ENCODE measurements at regions of chr7 and their contacts with region 1.

Region 1: GRCh38 chr7:98771519-98771918 is 98.3 kb downstream of the TMEM130 start:
- DNase-seq: no peak
- H3K4me3 Mint-ChIP-seq: no peak overlapping the region
- H3K27ac Mint-ChIP-seq: no peak overlapping the region
- H3K4me1 Mint-ChIP-seq: no peaks in the 10 kb centered on the region
- H3K27me3 Mint-ChIP-seq: peaks cover 3% of the 10 kb centered on the region

Region 2: DNA sequence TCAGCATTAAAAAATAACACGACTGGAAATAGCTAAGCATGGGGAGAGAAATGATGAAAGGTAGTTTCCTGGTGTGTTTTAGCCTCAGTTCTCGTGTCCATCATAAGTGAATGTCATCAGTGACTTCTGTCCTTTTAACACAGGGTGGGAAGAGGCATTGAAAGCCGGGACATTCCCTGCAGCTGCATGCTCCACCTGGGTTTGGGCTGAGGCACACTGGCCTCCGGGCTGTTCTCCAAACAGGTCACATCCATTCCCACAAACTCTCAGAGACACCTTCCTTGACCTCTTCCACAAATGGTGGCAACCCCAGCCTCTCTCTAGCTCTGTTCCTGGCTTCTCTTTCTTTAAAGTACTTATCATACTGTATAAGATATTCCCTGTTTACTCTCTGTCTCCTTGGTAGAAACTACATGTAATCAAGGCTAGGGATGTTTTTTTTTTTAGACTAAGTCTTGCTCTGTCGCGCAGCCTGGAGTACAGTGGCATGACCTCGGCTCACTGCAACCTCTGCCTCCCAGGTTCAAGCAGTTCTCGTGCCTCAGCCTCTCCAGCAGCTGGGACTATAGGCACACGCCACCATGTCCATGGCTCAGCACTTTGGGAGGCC is 393.2 kb before region 1 on chr7:
- CTCF ChIA-PET with region 1: no interaction called
- POLR2A ChIA-PET with region 1: interaction called, 13 read pairs
- DNase-seq: no peak
- H3K4me3 Mint-ChIP-seq: no peak overlapping the region
- H3K27ac Mint-ChIP-seq: no peak overlapping the region
- H3K4me1 Mint-ChIP-seq: no peaks in the 10 kb centered on the region
- H3K27me3 Mint-ChIP-seq: no peaks in the 10 kb centered on the region